ENCODE measurements at regions of chr5 and their contacts with region 1.

Region 1: GRCh38 chr5:10489810-10490426 is 48.2 kb downstream of the ROPN1L start:
- DNase-seq: no peak

Region 2: DNA sequence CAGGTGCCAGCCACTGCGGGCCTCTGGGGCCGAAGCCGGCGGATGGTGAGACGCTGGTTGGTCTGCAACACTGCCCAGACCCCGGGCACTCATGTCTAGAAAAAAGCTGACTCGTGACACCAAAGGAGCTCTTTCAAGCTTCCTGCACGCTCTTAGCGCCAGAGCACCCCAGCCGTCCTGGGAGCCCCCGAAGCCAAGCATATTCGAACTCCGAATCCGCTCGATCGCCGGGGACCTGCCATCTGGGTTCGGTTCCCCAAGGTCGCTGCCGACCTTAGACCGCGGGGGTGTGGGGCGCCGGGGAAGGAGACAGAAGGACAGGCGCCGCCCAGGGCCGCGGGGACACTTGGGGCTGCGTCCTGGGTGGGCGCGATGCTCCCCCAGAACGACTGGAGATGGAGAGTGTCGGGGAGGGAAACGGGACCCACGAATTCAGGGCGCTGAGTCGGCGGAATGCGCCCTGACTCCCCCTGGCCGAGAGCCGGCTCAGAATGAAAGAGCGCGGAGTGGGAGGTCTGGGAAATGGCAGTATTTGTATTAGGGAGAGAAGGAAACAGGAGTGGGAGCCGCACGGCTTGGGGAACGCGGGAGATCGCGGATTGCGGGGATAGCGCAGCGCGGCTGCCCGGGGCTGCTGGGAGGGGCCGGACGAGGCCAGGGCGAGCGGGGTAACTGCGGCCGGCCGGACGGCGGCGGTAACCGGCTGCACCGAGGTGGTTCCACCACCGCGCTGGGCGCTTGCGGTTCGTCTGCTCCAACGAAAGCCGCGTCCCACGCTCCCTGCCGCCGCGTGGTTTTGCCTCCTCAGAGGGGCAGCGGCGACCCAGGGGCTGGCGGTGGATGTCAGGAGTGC is 156.5 kb before region 1 on chr5:
- intact Hi-C with region 1: no loop called
- DNase-seq: peak; percentile 81

Region 3: DNA sequence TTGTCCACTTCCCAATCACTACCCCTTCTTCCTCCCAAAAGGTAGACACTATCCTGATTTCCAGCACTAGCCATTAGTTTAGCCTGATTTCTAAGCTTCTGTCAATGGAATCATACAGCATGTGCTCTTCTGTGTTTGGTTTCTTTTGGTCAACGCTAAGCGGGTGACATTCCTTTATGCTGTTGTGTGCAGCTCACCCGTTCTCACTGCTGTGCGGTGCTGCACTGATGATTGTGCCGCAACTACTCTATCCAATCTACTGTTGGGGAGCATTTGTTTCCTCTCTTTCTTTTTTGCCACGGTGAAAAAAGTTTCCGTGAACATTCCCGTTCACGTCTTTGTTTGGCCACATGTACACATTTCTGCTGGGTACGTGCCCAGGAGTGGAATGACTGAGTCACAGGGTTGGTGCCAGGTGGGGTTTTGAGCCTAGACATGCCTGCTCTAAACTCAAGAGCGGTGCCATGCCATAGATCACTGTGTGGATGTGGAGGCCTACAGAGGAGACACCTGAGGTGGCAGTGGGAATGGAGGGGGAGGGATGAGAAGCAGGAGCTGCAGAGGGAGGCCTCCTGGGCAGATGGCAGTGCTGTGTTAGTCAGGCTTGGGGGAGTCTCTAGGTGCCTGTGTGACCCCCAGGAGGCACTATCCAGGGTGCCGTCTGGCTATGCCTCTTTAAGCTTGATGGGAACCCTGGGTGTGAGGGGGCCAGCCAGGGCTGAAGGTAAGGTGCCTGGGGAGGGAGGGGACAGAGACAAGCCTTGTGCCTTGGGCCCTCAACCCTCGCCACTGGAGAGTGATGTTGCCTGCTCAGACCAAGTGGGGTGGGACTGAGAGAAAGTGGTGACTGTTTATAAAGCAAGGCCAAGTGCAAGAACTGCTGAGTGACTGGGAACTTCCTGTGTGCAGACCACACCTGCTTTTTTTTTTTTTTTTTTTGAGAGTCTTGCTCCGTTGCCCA is 62.5 kb after region 1 on chr5:
- intact Hi-C with region 1: loop called (anchors 5 kb)
- DNase-seq: peak; percentile 74

Region 4: DNA sequence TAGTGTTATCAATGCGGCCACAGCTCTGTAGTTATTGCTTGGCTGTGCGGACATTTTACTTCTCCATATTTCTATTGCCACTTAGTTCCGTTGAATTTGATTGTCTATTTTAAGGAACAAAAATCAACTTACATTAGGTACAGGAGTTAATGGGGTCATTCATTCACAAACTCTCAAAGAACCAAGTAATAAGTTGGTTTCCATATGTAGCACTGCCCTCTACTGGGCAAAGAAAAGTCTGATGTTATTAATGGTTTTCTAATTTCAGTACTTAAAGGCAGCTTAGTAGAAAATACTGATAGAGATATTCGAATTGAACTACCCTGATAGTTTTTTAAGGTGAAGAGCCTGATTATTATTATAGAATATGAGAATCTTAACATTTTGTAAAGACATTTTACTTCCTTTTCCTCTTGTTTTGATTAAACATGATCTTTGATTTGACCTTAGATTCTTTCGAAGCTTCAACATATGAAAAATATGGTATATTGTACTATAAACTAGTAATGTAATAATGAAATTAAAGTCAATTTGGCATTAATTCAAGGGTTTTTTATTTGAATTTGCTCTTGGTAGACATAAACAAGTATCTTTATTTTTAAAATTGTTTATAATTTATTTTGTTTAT is 1533.8 kb after region 1 on chr5:
- intact Hi-C with region 1: no loop called
- DNase-seq: no peak

Measured in cardiac septum (tissue), 1 donor.